Activated T-helper 2 cell treated with anti-CD3 and anti-CD28 coated beads, Interferon-gamma antibody, Interleukin-2, Interleukin-4, amounts not matched to agents 10 μg/mL and 5 μg/mL and 100 μg/mL, durations not matched to agents 14 hours and 24 hours and 36 hours (primary cell): ENCODE measurements at regions of chr6 and their contacts with region 1.

Region 1: GRCh38 chr6:161694995-161695394 is 421.1 kb upstream of the AGPAT4 start:
- DNase-seq: no peak
- H3K4me3 Mint-ChIP-seq: no peak overlapping the region
- H3K27ac Mint-ChIP-seq: no peak overlapping the region
- H3K4me1 Mint-ChIP-seq: no peaks in the 10 kb centered on the region
- H3K27me3 Mint-ChIP-seq: no peaks in the 10 kb centered on the region

Region 2: GRCh38 chr6:161393839-161394364 is 301.1 kb before region 1 on chr6:
- intact Hi-C with region 1: loop called (anchors 5 kb)
- DNase-seq: peak; percentile 48
- H3K4me3 Mint-ChIP-seq: no peak overlapping the region
- H3K27ac Mint-ChIP-seq: no peak overlapping the region
- H3K4me1 Mint-ChIP-seq: no peaks in the 10 kb centered on the region
- H3K27me3 Mint-ChIP-seq: peaks cover 39% of the 10 kb centered on the region

Region 3: DNA sequence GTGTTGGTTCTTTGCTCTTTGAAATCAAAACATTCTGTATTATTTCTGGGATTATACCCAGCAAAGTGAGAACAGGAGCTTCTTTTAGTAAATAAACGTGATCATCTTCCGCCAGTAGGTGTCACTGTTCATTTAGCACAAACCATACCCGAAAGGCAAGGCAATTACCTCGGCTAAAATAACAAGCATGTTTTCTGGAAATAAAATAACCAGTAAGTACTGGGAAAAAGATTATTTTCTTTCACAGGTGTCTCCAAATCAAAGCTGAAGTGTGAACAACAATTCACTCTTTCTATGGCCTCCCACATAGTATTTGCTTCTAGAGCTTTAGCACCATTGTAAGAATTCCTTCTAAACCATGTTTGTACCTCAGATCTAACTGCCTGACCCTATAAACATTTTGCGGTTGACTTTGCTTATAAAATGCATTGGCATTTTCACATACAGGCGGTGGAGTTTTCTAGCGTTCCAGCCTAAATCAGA is 276.5 kb before region 1 on chr6:
- intact Hi-C with region 1: loop called (anchors 1 kb)
- DNase-seq: no peak
- H3K4me3 Mint-ChIP-seq: no peak overlapping the region
- H3K27ac Mint-ChIP-seq: no peak overlapping the region
- H3K4me1 Mint-ChIP-seq: no peaks in the 10 kb centered on the region
- H3K27me3 Mint-ChIP-seq: peaks cover 14% of the 10 kb centered on the region